Pancreas (tissue), 10 donors: ENCODE measurements at regions of chr5 and their contacts with region 1.

Region 1: DNA sequence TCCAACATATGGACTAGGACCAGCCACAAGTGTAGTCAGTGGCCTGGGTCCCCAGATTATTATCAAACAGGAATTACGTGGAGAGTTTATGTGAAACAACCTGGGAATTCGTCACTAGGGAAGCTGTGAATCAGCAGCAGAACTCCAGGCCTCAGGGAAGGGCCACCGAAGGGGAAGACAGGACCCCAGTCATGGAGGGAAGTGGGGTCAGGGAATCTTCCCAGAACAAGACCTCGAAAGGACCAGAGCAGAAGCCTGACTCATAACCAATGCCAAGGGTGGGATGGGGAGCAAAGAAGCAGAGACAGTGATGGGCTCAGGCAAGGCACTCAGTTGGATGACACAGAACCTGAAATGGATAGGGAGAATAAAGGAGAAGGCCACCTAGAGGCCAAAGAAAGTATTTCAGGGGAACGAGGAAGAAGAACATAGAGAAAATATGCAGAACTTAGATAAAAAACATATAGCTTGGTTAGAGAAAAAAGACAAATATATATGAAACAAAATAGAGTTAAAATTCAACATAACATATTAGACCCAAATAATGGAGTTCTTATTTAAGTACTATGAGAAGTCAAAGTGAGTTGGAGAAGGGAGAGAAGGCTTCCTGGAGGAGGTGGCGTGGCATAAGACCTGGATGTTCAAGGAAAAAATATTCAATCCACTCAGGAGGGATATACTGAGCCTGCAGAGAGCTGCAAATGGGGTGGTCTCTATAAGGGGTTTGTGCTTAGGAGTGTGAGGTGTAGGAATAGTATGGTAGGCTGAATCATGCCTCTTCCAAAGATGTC is 66.7 kb upstream of the CAST start:
- DNase-seq: no peak
- ATAC-seq: peak in 1 of 4 donors; percentile 41
- H3K4me3 ChIP-seq: no peak overlapping the region
- H3K27ac ChIP-seq: no peak overlapping the region
- H3K4me1 ChIP-seq: no peaks in the 10 kb centered on the region
- H3K27me3 ChIP-seq: no peaks in the 10 kb centered on the region
- CTCF ChIP-seq: peak in 3 of 4 donors; percentile 14 to 33 (median 21)

Region 2: DNA sequence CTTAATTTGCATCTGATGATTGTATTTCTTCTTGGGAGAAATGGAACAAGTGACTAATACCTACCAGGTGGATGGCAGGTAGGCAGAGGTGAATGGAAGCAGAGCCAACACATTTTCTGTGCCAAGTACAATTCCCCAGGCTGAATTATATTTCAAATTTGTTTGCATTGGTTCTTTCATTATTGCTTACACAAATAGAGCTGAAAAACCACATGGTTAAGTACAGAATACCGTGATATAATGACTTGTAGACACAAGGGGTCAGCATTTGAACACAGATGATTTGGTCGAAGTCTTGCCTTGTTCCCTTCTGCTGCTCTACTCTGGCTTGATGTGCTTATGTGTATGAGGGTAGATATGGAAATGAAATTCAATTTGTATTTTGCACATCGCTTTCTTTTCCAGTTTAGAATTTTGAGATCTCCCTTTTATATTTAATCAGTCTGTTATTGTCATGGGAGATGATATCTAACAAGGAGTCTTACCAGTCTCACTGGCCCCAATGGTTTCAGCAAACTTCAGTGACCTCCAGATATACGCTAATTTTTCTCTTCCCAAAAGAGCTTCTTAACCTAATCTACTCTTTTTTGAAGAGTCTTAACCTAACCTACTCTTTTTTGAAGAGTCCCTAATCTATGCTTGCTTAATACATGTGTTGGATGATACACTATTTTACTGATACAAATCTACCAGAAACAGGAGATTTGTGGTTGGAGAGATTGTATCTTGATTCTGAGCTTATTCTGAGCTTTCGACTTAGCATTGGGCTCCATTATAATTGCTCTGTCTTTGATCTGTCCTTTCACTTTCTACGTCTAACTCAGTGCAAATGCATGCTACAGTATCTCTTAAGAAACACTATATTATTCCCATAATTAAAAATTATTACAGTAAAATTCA is 250.6 kb before region 1 on chr5:
- intact Hi-C with region 1: loop called in 2 of 3 experiments (anchors 5 kb)
- DNase-seq: peak in 4 of 6 donors; percentile 35 to 76 (median 50)
- ATAC-seq: peak; percentile 85 to 94 (median 94)
- H3K4me3 ChIP-seq: no peak overlapping the region
- H3K27ac ChIP-seq: peak overlapping the region in 2 of 4 donors; percentile 41 to 53
- H3K4me1 ChIP-seq: peaks cover 11 to 27% (median 25%) of the 10 kb centered on the region in 3 donors
- H3K27me3 ChIP-seq: no peaks in the 10 kb centered on the region
- CTCF ChIP-seq: peak in 2 of 4 donors; percentile 36 to 42

Region 3: DNA sequence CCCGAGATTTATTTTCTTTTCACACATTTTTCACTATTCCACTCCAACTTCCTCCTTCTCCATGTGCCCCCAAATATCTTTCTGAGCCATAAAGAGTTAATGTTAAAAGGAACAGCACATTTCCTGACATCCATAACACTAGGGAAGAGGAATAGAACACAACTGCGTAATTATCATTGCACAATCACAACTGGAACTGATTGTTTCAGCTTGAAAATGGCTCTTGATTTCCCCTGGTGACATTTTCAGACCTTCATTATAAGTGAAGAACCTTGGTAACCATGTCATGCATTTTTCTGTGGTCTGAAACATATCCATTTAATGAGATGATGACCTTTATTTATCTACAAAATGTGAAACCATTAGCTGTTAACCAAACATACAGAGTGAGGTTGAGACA is 244.8 kb before region 1 on chr5:
- intact Hi-C with region 1: loop called in 2 of 3 experiments (anchors 5 kb)
- DNase-seq: no peak
- ATAC-seq: peak in 2 of 4 donors; percentile 48 to 67
- H3K4me3 ChIP-seq: no peak overlapping the region
- H3K27ac ChIP-seq: no peak overlapping the region
- H3K4me1 ChIP-seq: no peaks in the 10 kb centered on the region
- H3K27me3 ChIP-seq: no peaks in the 10 kb centered on the region
- CTCF ChIP-seq: no peak

Region 4: GRCh38 chr5:96565582-96566265 is 29.8 kb before region 1 on chr5:
- intact Hi-C with region 1: no loop called
- DNase-seq: no peak
- ATAC-seq: peak in 1 of 4 donors; percentile 34
- H3K4me3 ChIP-seq: no peak overlapping the region
- H3K27ac ChIP-seq: no peak overlapping the region
- H3K4me1 ChIP-seq: peaks cover 0 to 7% (median 0%) of the 10 kb centered on the region in 3 donors
- H3K27me3 ChIP-seq: no peaks in the 10 kb centered on the region
- CTCF ChIP-seq: no peak

Region 5: GRCh38 chr5:96714951-96715451 is 119.5 kb after region 1 on chr5:
- intact Hi-C with region 1: no loop called
- DNase-seq: peak in 4 of 6 donors; percentile 37 to 78 (median 70)
- ATAC-seq: peak; percentile 93 to 95 (median 94)
- H3K4me3 ChIP-seq: no peak overlapping the region
- H3K27ac ChIP-seq: peak overlapping the region; percentile 71 to 77 (median 74)
- H3K4me1 ChIP-seq: peaks cover 27 to 50% (median 33%) of the 10 kb centered on the region in 3 donors
- H3K27me3 ChIP-seq: no peaks in the 10 kb centered on the region
- CTCF ChIP-seq: no peak